CD8-positive, alpha-beta memory T cell (primary cell): ENCODE measurements at regions of chr10 and their contacts with region 1.

Region 1: GRCh38 chr10:70115948-70116682 is 16.5 kb downstream of the AIFM2 start:
- DNase-seq: peak; percentile 40 to 75 (median 42)
- H3K4me3 ChIP-seq: no peak overlapping the region
- H3K4me3 Mint-ChIP-seq: peak overlapping the region in 1 of 7 donors; percentile 39
- H3K27ac ChIP-seq: no peak overlapping the region
- H3K27ac Mint-ChIP-seq: peak overlapping the region in 3 of 8 donors; percentile 44 to 75 (median 72)
- H3K4me1 ChIP-seq: peaks cover 7% of the 10 kb centered on the region
- H3K4me1 Mint-ChIP-seq: peaks cover 5 to 9% (median 6%) of the 10 kb centered on the region in 3 donors
- H3K27me3 ChIP-seq: no peaks in the 10 kb centered on the region
- H3K27me3 Mint-ChIP-seq: no peaks in the 10 kb centered on the region

Region 2: DNA sequence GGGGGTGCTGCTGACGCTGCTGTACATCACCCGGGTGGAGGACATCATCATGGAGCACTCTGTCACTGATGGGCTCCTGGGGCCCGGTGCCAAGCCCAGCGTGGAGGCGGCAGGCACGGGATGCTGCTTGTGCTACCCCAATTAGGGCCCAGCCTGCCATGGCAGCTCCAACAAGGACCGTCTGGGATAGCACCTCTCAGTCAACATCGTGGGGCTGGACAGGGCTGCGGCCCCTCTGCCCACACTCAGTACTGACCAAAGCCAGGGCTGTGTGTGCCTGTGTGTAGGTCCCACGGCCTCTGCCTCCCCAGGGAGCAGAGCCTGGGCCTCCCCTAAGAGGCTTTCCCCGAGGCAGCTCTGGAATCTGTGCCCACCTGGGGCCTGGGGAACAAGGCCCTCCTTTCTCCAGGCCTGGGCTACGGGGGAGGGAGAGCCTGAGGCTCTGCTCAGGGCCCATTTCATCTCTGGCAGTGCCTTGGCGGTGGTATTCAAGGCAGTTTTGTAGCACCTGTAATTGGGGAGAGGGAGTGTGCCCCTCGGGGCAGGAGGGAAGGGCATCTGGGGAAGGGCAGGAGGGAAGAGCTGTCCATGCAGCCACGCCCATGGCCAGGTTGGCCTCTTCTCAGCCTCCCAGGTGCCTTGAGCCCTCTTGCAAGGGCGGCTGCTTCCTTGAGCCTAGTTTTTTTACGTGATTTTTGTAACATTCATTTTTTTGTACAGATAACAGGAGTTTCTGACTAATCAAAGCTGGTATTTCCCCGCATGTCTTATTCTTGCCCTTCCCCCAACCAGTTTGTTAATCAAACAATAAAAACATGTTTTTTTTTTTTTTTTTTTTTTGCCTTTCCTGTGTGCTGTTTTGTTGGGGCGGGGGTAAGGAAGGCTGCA is 609.0 kb before region 1 on chr10:
- CTCF ChIA-PET with region 1: no interaction called
- POLR2A ChIA-PET with region 1: no interaction called
- DNase-seq: no peak
- H3K4me3 ChIP-seq: peak overlapping the region; percentile 57
- H3K4me3 Mint-ChIP-seq: peak overlapping the region; percentile 0 to 82 (median 74)
- H3K27ac ChIP-seq: no peak overlapping the region
- H3K27ac Mint-ChIP-seq: peak overlapping the region; percentile 24 to 97 (median 83)
- H3K4me1 ChIP-seq: peaks cover 12% of the 10 kb centered on the region
- H3K4me1 Mint-ChIP-seq: peaks cover 9 to 12% (median 11%) of the 10 kb centered on the region in 3 donors
- H3K27me3 ChIP-seq: no peaks in the 10 kb centered on the region
- H3K27me3 Mint-ChIP-seq: peaks cover 0 to 2% of the 10 kb centered on the region in 2 donors

Region 3: DNA sequence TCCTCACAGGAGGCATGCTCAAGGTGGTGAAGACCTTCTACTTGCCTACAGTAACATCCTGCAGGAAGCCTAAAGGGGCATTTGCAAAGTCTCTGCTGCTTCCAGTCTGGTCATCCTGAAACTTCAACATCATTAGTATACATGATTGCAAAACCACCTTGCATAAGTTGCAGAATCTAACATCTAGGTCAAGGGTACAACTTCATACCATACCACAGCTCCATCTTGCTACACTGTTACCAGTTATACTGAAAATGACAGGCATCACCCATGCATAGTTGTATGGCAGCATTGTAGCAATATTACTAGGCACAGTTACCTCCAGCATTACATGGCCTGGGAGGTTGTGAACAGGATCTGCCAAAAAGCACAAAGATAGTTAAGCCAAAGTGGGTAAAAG is 77.2 kb before region 1 on chr10:
- CTCF ChIA-PET with region 1: no interaction called
- POLR2A ChIA-PET with region 1: no interaction called
- DNase-seq: no peak
- H3K4me3 ChIP-seq: no peak overlapping the region
- H3K4me3 Mint-ChIP-seq: no peak overlapping the region
- H3K27ac ChIP-seq: no peak overlapping the region
- H3K27ac Mint-ChIP-seq: no peak overlapping the region
- H3K4me1 ChIP-seq: no peaks in the 10 kb centered on the region
- H3K4me1 Mint-ChIP-seq: no peaks in the 10 kb centered on the region
- H3K27me3 ChIP-seq: no peaks in the 10 kb centered on the region
- H3K27me3 Mint-ChIP-seq: peaks cover 18 to 30% of the 10 kb centered on the region in 2 donors

Region 4: DNA sequence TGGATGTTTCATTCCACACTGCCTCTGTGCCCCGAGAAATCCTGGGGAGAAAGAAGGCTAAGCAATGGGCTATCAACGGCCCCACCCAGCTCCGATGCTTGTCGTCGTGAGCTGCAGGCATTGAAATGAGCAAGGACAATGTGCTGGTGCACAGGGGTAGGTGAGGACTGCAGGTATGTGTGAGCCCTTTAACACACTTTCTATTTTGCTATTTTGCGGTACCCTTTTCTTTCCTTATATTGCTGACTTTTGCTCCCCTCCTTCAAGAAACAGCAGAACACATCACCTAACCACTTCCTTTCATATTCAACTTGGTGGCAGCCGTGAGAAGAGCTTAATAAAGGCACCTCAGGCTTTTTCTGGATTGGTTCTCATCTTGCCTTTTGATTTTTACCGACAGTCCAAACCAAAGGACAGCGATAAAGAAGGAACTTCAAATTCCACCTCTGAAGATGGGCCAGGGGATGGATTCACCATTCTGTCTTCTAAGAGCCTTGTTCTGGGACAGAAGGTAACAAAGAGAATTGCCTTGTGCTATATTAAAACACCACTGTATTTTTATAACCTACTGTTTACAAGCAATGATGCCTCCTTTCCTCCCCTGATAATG is 22.7 kb before region 1 on chr10:
- CTCF ChIA-PET with region 1: interaction called, 51 read pairs
- POLR2A ChIA-PET with region 1: no interaction called
- DNase-seq: peak in 2 of 5 donors; percentile 47 to 52
- H3K4me3 ChIP-seq: peak overlapping the region; percentile 53
- H3K4me3 Mint-ChIP-seq: peak overlapping the region; percentile 74 to 97 (median 84)
- H3K27ac ChIP-seq: no peak overlapping the region
- H3K27ac Mint-ChIP-seq: peak overlapping the region; percentile 90 to 100 (median 96)
- H3K4me1 ChIP-seq: peaks cover 32% of the 10 kb centered on the region
- H3K4me1 Mint-ChIP-seq: peaks cover 42 to 63% (median 52%) of the 10 kb centered on the region in 3 donors
- H3K27me3 ChIP-seq: no peaks in the 10 kb centered on the region
- H3K27me3 Mint-ChIP-seq: no peaks in the 10 kb centered on the region

Region 5: DNA sequence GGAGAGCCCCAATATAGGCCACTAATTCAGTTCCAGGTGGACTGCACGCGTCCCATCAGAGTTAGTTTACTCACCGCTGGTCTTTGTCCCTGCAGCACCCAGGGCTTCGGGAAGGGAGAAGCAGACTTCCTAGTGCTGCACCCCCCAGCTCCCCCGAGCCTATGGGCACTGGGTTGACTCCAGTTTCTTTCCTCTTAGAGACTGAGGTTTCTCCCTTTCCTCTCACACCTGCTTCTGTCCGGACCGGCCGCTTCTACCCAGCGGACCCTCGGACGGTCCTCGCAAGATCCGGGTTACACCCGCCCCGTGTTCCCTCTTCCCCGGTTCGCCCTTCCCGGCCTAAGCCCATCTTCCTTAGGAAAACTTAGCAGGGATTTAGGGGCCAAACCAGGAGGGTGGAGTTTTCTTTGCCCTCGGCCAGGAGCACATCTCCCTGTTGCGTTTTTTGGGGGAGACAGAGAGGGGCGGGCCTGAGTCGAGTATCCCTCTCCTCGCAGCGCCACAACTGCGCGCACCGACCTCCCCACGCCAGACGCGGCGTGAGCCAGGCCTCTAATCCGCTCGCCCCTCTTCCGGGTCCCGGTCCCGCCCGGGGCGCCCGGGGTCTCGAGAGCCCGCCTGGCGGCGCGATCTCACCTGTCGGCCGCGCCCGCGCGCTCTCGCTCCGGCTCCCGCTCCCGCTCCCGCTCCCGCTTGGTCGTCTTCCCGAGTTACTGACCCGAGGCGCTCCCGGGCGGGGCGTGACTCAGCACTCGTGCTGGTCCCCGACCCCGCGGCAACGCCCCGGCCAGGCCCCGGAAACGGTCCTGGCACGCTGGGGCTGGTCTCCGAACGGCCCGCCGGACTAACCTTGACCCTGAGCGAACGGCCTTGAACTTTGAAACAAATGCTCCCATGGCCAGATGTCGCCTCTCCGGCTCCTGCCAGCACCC is 16.2 kb after region 1 on chr10 and contains the start of gene AIFM2:
- CTCF ChIA-PET with region 1: interaction called, 23 read pairs
- POLR2A ChIA-PET with region 1: no interaction called
- DNase-seq: peak; percentile 22 to 73 (median 42)
- H3K4me3 ChIP-seq: peak within 1 kb of the TSS; percentile 77
- H3K4me3 Mint-ChIP-seq: peak within 1 kb of the TSS; percentile 83 to 96 (median 89)
- H3K27ac ChIP-seq: peak within 1 kb of the TSS; percentile 54
- H3K27ac Mint-ChIP-seq: peak within 1 kb of the TSS; percentile 70 to 96 (median 89)
- H3K4me1 ChIP-seq: peaks cover 11% of the 10 kb centered on the region
- H3K4me1 Mint-ChIP-seq: peaks cover 28 to 43% (median 39%) of the 10 kb centered on the region in 3 donors
- H3K27me3 ChIP-seq: no peaks in the 10 kb centered on the region
- H3K27me3 Mint-ChIP-seq: peaks cover 0 to 1% of the 10 kb centered on the region in 2 donors
- total RNA-seq, gene AIFM2: 17.6 to 17.9 TPM

Region 6: GRCh38 chr10:70137927-70138883 is 22.1 kb after region 1 on chr10:
- CTCF ChIA-PET with region 1: interaction called, 44 read pairs
- POLR2A ChIA-PET with region 1: no interaction called
- DNase-seq: no peak
- H3K4me3 ChIP-seq: no peak overlapping the region
- H3K4me3 Mint-ChIP-seq: no peak overlapping the region
- H3K27ac ChIP-seq: no peak overlapping the region
- H3K27ac Mint-ChIP-seq: peak overlapping the region in 2 of 8 donors; percentile 24 to 61
- H3K4me1 ChIP-seq: no peaks in the 10 kb centered on the region
- H3K4me1 Mint-ChIP-seq: peaks cover 26 to 33% (median 33%) of the 10 kb centered on the region in 3 donors
- H3K27me3 ChIP-seq: no peaks in the 10 kb centered on the region
- H3K27me3 Mint-ChIP-seq: peaks cover 0 to under 1% of the 10 kb centered on the region in 2 donors

Region 7: GRCh38 chr10:70160798-70161197 is 44.7 kb after region 1 on chr10:
- CTCF ChIA-PET with region 1: no interaction called
- POLR2A ChIA-PET with region 1: no interaction called
- DNase-seq: no peak
- H3K4me3 ChIP-seq: no peak overlapping the region
- H3K4me3 Mint-ChIP-seq: peak overlapping the region in 1 of 7 donors; percentile 17
- H3K27ac ChIP-seq: no peak overlapping the region
- H3K27ac Mint-ChIP-seq: peak overlapping the region in 6 of 8 donors; percentile 17 to 81 (median 52)
- H3K4me1 ChIP-seq: peaks cover 50% of the 10 kb centered on the region
- H3K4me1 Mint-ChIP-seq: peaks cover 59 to 84% (median 75%) of the 10 kb centered on the region in 3 donors
- H3K27me3 ChIP-seq: no peaks in the 10 kb centered on the region
- H3K27me3 Mint-ChIP-seq: no peaks in the 10 kb centered on the region